SK-N-SH (cell line): ENCODE measurements at regions of chr1 and their contacts with region 1.

Region 1: GRCh38 chr1:232891071-232891470 is 59.3 kb upstream of the NTPCR start:
- DNase-seq: no peak
- H3K4me3 ChIP-seq: no peak overlapping the region
- H3K27ac ChIP-seq: no peak overlapping the region
- H3K4me1 ChIP-seq: peaks cover 0 to 2% of the 10 kb centered on the region in 2 experiments; a peak in 1 of 4 replicates
- H3K27me3 ChIP-seq: no peaks in the 10 kb centered on the region
- CTCF ChIP-seq: no peak
- EP300 ChIP-seq: no peak
- RAD21 ChIP-seq: no peak

Region 2: DNA sequence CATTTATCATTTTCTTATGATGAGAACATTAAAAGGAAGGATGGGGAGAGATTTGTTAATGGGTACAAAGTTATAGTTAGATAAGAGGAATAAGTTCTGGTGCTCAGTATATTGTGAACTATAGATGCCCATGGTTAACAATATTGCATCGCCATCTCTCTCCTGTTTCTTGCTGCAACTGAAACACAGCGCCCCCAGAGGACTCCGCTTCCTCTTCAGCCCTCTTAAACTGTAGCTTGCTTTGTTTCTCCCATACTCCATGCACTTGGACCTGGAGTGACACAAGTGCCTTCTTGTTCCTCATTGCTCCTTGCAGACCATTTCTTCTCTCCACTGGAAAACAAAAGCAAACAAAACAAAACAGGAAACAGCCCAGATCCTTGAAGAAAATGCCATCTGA is 10.7 kb before region 1 on chr1:
- CTCF ChIA-PET with region 1: interaction called, 11 read pairs
- POLR2A ChIA-PET with region 1: no interaction called
- DNase-seq: peak; percentile 40
- H3K4me3 ChIP-seq: no peak overlapping the region; a peak in 1 of 4 replicates
- H3K27ac ChIP-seq: no peak overlapping the region
- H3K4me1 ChIP-seq: no peaks in the 10 kb centered on the region
- H3K27me3 ChIP-seq: no peaks in the 10 kb centered on the region
- CTCF ChIP-seq: peak; percentile 44
- EP300 ChIP-seq: no peak
- RAD21 ChIP-seq: peak; percentile 41; the same call in 1 of the 2 replicates